Activated T-helper 1 cell treated with anti-CD3 and anti-CD28 coated beads, Interleukin-12 subunit alpha, Interleukin-12 subunit beta, Interleukin-2, Interleukin-4 antibody, amounts not matched to agents 30 ng/mL and 10 ng/mL and 1 ng/mL, durations not matched to agents 14 hours and 24 hours and 36 hours (primary cell): ENCODE measurements at regions of chr17 and their contacts with region 1.

Region 1: DNA sequence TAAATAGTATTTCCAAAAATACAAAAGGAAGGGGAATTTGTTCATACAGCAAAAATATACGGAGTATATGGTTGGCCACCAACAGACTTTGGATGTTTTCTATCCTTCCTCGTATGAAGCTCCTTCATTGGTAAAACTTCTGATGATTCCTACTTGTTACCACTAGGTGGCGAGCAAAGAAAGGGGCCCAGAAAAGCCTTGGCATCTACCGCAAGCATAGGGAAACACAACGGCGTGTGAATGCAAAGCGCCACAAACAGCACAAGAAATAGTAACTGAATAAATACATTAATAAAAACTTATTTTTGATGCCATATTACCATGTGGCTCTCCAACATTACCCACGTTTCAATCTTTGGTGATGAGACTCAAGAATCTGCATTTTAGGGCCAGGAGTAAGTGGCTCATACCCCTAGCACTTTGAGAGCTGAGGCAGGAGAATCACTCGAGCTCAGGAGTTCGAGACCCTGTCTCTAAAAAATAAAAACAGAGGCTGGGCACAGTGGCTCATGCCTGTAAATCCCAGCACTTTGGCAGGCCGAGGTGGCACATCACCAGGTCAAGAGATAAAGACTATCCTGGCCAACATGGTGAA is 34.5 kb downstream of the YWHAE start:
- DNase-seq: peak; percentile 48
- H3K4me3 Mint-ChIP-seq: no peak overlapping the region
- H3K27ac Mint-ChIP-seq: no peak overlapping the region
- H3K4me1 Mint-ChIP-seq: peaks cover 47% of the 10 kb centered on the region
- H3K27me3 Mint-ChIP-seq: no peaks in the 10 kb centered on the region

Region 2: GRCh38 chr17:1347589-1348323 is 17.8 kb before region 1 on chr17:
- intact Hi-C with region 1: loop called (anchors 2 kb)
- DNase-seq: no peak
- H3K4me3 Mint-ChIP-seq: no peak overlapping the region
- H3K27ac Mint-ChIP-seq: peak overlapping the region; percentile 21
- H3K4me1 Mint-ChIP-seq: peaks cover 16% of the 10 kb centered on the region
- H3K27me3 Mint-ChIP-seq: no peaks in the 10 kb centered on the region

Region 3: DNA sequence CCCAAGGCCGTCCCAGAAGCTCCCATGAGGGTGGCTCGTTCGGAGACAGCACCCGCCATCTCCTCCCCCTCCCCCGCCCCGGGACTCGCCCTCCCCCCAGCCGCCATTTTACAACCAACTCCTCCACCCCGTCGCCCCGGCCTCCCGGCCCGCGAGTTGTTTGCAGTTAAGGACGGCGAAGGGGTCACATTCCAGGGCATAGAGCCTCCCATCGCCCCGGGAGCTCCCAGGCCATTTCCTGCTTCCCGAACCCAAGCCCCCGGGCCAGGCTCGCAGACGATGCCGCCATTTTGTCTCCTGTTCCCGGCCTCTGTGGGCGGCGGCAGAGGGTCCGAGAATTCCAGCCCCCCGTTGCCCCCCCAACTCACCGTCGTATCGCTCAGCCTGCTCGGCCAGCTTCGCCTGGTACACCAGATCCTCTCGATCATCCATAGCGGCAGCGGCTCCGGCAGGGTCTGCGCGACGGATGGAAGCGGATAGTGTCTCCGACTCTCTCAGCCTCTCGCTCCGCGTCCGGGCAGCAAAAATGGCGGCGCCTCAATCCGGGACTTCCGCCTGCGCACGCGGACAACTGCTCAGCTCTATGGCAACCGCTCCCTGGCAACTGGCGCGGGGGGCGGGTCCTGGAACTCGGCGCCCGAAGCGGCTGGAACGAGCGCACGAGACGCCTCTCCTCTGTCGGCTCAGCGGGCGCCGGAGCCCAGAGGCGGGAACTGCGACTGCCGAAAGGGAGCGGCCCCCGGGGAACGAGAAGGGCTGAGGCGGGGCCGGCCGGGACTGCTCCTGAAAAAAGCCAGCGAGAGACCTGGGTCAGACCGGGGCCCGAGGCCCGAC is 34.4 kb after region 1 on chr17 and contains the start of gene YWHAE:
- intact Hi-C with region 1: loop called (anchors 1 kb)
- DNase-seq: peak; percentile 95
- H3K4me3 Mint-ChIP-seq: peak within 1 kb of the TSS; percentile 97
- H3K27ac Mint-ChIP-seq: peak within 1 kb of the TSS; percentile 98
- H3K4me1 Mint-ChIP-seq: peaks cover 21% of the 10 kb centered on the region
- H3K27me3 Mint-ChIP-seq: peaks cover 5% of the 10 kb centered on the region
- total RNA-seq, gene YWHAE: 439 and 444 TPM in 2 replicates

Region 4: DNA sequence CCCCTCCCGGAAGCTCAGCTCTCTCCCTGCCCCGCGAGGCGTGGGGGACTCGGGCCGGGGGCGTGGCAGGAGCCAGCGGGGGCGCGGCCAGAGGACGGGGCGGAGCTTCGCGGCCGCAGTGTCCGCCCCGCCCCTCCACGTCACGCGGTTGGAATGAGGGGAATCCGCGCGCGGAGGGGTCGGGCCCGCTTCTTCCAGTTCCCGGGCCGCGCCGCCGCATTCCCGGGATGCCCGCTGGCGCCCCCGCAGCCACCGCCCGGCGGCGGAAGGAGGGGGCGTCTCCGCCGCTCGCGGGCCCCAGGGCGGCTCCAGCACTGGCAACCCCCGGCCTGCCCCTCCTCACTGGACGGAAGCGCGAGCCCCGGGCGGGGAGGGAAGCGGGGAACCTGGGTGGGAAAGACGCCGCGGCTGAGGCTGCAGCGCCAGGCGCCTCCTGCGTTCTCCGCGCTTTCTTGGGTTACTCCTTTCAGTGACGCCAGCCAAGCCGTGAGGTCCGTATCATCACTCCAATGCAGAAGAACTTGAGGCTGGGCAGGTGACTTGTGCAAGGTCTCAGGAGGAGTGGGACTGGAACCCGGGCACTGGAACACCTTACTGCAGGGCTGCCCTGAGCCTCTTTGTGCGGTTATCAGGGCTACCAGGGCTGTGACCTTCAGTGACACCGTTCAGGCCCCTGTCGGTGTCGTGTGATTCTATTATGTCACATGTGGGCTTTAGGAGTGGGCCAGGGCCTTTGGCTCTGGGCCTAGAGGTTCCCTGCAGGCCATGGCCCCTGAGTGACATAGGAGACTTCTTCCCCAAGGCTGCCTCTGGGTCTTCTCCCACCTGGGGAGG is 122.7 kb after region 1 on chr17:
- intact Hi-C with region 1: loop called (anchors 5 kb)
- DNase-seq: peak; percentile 64
- H3K4me3 Mint-ChIP-seq: peak overlapping the region; percentile 84
- H3K27ac Mint-ChIP-seq: no peak overlapping the region
- H3K4me1 Mint-ChIP-seq: peaks cover 24% of the 10 kb centered on the region
- H3K27me3 Mint-ChIP-seq: peaks cover 5% of the 10 kb centered on the region

Region 5: DNA sequence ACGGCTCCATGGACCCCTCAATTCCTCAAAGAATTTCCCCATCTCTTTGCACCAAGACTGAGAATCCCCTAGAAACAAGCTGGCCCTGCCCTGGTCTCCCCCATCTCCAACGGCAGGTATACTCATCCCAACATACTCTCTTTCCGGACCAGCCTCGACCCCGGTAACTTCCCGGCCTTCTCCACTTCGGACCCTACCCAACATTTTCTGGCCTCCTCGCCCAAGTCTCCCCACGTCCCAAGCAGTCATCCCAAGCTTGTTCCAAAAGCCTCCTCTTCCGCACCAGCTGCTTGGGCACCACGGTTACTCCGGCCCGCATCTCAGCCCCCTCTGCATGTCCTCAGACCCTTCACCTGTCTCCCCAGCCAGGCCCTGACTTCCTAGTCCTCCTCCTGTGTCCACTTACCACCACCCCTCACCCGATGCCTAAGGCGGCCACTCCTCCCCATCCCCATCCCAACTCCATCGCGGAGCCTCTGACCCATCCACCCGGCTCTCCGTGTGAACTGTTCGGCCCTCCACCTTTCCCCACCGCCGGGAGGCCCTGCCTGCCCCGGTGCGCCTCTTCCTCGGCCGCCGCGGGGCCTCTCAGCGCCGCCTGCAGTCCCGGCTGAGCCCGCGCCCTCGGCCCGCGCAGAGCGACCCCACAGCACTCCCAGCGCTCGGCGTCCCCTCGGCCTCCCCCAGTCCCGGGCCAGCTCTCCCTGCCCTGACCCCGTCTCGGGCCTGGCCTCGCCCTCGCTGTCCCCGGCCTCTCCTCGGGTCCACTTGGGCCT is 196.0 kb after region 1 on chr17:
- intact Hi-C with region 1: loop called (anchors 5 kb)
- DNase-seq: peak; percentile 27
- H3K4me3 Mint-ChIP-seq: peak overlapping the region; percentile 88
- H3K27ac Mint-ChIP-seq: peak overlapping the region; percentile 61
- H3K4me1 Mint-ChIP-seq: peaks cover 40% of the 10 kb centered on the region
- H3K27me3 Mint-ChIP-seq: peaks cover 11% of the 10 kb centered on the region